ENCODE measurements at regions of chr3 and their contacts with region 1.

Region 1: DNA sequence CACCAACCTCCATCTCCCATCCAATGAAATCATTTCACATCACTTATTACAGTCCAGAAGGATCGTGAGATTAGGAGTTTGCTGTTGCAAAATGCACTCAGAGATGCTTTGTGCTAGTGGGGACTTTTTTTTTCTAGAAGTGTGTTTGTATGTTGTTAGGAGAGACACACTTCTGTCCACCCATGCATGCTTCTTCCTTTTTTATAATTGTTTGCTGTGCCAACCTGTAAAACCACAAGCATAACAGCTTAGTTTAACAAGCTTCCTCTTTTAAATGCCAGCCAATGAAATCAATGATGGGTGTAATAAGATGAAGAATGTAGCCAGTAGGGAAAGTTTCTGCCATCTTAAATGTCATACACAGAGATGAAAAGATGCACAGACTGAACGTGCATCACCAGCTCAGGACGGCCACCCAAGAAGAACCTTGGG is 305.6 kb upstream of the STT3B start:
- DNase-seq: no peak
- ATAC-seq: peak; percentile 64
- H3K4me3 Mint-ChIP-seq: no peak overlapping the region
- H3K27ac Mint-ChIP-seq: peak overlapping the region; percentile 81
- H3K4me1 Mint-ChIP-seq: peaks cover 79% of the 10 kb centered on the region
- H3K27me3 Mint-ChIP-seq: no peaks in the 10 kb centered on the region
- CTCF ChIP-seq: no peak

Region 2: GRCh38 chr3:31092748-31093551 is 134.2 kb before region 1 on chr3:
- CTCF ChIA-PET with region 1: no interaction called
- POLR2A ChIA-PET with region 1: no interaction called
- intact Hi-C with region 1: no loop called
- DNase-seq: no peak
- ATAC-seq: no peak
- H3K4me3 Mint-ChIP-seq: no peak overlapping the region
- H3K27ac Mint-ChIP-seq: no peak overlapping the region
- H3K4me1 Mint-ChIP-seq: peaks cover 7% of the 10 kb centered on the region
- H3K27me3 Mint-ChIP-seq: no peaks in the 10 kb centered on the region
- CTCF ChIP-seq: no peak

Region 3: GRCh38 chr3:31210155-31210554 is 17.0 kb before region 1 on chr3:
- CTCF ChIA-PET with region 1: no interaction called
- POLR2A ChIA-PET with region 1: no interaction called
- intact Hi-C with region 1: no loop called
- DNase-seq: no peak
- ATAC-seq: no peak
- H3K4me3 Mint-ChIP-seq: no peak overlapping the region
- H3K27ac Mint-ChIP-seq: no peak overlapping the region
- H3K4me1 Mint-ChIP-seq: peaks cover 47% of the 10 kb centered on the region
- H3K27me3 Mint-ChIP-seq: no peaks in the 10 kb centered on the region
- CTCF ChIP-seq: no peak

Region 4: GRCh38 chr3:31240466-31240865 is 13.3 kb after region 1 on chr3:
- CTCF ChIA-PET with region 1: interaction called, 10 read pairs
- POLR2A ChIA-PET with region 1: no interaction called
- intact Hi-C with region 1: loop called (anchors 2 kb)
- DNase-seq: no peak
- ATAC-seq: no peak
- H3K4me3 Mint-ChIP-seq: no peak overlapping the region
- H3K27ac Mint-ChIP-seq: no peak overlapping the region
- H3K4me1 Mint-ChIP-seq: peaks cover 26% of the 10 kb centered on the region
- H3K27me3 Mint-ChIP-seq: no peaks in the 10 kb centered on the region
- CTCF ChIP-seq: no peak